AG04450 (cell line): ENCODE measurements at regions of chr19 and their contacts with region 1.

Region 1: GRCh38 chr19:46704379-46705076 is 12.4 kb downstream of the PRKD2 start:
- DNase-seq: no peak
- H3K4me3 ChIP-seq: no peak overlapping the region
- H3K27ac ChIP-seq: no peak overlapping the region
- H3K27me3 ChIP-seq: no peaks in the 10 kb centered on the region
- CTCF ChIP-seq: peak; percentile 91

Region 2: GRCh38 chr19:46600384-46601317 is 103.9 kb before region 1 on chr19:
- CTCF ChIA-PET with region 1: interaction called, 18 read pairs
- POLR2A ChIA-PET with region 1: no interaction called
- DNase-seq: peak; percentile 97
- H3K4me3 ChIP-seq: peak overlapping the region; percentile 94
- H3K27ac ChIP-seq: peak overlapping the region; percentile 99
- H3K27me3 ChIP-seq: no peaks in the 10 kb centered on the region
- CTCF ChIP-seq: no peak

Region 3: DNA sequence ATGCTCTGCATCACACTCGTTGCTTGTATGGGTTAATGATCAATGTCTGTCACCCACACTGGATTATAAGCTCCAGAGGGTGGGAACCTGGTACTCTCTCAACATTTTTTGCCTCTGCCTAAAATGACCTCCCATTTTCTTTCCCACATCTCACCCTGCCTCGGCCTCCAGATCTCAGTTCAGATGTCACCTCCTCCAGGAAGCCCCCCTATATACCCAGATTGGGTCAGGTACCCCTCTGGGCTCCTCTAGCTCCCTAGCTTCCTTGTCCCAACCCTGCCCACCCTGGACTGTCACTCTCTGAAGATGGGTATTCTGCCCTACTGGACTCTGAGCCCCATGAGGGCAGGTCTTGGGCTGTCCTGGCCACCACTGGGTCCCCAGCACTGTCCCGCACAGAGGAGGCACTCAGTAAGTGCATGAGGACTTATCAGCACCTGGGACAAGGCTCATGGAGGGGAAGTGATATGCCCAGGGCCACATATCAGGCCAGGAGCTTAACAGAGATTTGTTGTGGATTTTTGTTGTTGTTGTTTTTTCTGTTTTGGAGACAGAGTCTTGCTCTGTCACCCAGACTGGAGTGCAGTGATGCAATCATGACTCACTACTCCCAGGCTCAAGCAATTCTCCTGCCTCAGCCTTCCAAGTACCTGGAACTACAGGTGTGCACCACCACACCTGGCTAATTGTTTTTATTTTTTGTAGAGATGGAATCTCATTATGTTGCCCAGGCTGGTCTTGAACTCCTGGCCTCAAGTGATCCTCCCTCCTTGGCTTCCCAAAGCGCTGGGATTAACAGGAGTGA is 11.4 kb before region 1 on chr19:
- CTCF ChIA-PET with region 1: interaction called, 47 read pairs
- POLR2A ChIA-PET with region 1: no interaction called
- DNase-seq: no peak
- H3K4me3 ChIP-seq: no peak overlapping the region
- H3K27ac ChIP-seq: no peak overlapping the region
- H3K27me3 ChIP-seq: no peaks in the 10 kb centered on the region
- CTCF ChIP-seq: no peak

Region 4: GRCh38 chr19:46717034-46717723 is 12.7 kb after region 1 on chr19 and contains the start of gene PRKD2:
- CTCF ChIA-PET with region 1: interaction called, 46 read pairs
- POLR2A ChIA-PET with region 1: interaction called, 3 read pairs
- DNase-seq: peak; percentile 43
- H3K4me3 ChIP-seq: peak within 1 kb of the TSS; percentile 76
- H3K27ac ChIP-seq: peak within 1 kb of the TSS; percentile 21
- H3K27me3 ChIP-seq: no peaks in the 10 kb centered on the region
- CTCF ChIP-seq: no peak
- polyA plus RNA-seq, gene PRKD2: 6.7 and 10.3 TPM in 2 replicates

Region 5: GRCh38 chr19:46728693-46729676 is 24.5 kb after region 1 on chr19:
- CTCF ChIA-PET with region 1: interaction called, 16 read pairs
- POLR2A ChIA-PET with region 1: no interaction called
- DNase-seq: no peak
- H3K4me3 ChIP-seq: no peak overlapping the region
- H3K27ac ChIP-seq: peak overlapping the region; percentile 11
- H3K27me3 ChIP-seq: no peaks in the 10 kb centered on the region
- CTCF ChIP-seq: peak; percentile 86

Region 6: DNA sequence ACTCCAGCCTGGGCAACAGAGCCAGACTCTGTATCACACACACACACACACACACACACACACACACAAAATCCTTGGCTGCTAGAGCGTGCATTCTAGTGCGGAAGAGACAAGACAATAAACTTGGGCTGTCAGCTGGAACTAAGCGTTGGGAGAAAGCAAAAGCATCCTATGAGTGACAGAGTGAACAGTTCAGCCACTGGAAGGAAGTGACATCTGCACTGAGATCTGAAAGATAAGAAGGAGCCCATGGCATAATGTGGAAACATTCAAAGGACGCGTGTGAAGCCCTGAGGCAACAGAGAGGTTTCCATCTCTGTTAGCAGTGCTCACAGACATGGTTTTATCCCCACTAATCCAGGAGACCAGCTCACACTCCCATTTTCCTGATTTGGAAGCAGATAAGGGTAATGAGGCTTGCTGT is 87.4 kb after region 1 on chr19:
- CTCF ChIA-PET with region 1: no interaction called
- POLR2A ChIA-PET with region 1: no interaction called
- DNase-seq: no peak
- H3K4me3 ChIP-seq: no peak overlapping the region
- H3K27ac ChIP-seq: no peak overlapping the region
- H3K27me3 ChIP-seq: no peaks in the 10 kb centered on the region
- CTCF ChIP-seq: no peak